K562 (cell line): ENCODE measurements at regions of chr9 and their contacts with region 1.

Region 1: DNA sequence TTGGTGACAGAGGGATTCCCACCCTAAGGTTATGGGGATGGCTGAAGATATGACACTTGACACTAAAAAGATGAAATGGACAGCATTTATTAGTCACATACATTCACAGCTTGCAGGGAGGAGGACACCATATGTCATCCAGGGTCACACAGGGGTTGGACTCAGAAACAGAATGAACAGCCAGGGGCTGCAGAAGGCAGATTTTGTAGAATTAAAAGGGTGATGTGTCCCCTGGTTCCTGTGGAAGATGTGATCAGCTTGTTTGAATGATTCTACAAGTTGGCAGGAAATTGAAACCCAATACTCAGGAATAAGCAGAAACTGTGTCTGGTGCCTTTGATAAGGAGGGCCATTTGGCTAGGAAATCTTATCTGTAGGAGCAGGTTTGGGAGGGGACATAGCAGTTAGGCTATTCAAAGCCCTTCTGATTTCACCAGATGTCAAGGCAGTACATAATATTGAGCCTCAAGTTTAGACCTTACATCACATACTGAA is 102.3 kb upstream of the GRIN3A start:
- DNase-seq: peak; percentile 79 to 93 (median 82)
- ATAC-seq: peak; percentile 93
- H3K4me3 ChIP-seq: no peak overlapping the region
- H3K27ac ChIP-seq: peak overlapping the region; percentile 56; the same call in 2 of the 3 replicates
- H3K4me1 ChIP-seq: peaks cover 13 to 22% of the 10 kb centered on the region in 2 experiments; a peak in 3 of 5 replicates
- H3K27me3 ChIP-seq: no peaks in the 10 kb centered on the region
- CTCF ChIP-seq: no peak
- EP300 ChIP-seq: peak; percentile 100
- POLR2A ChIP-seq: no peak
- RAD21 ChIP-seq: peak in 1 of 2 experiments; percentile 24; a peak in 2 of 4 replicates

Region 2: GRCh38 chr9:101791938-101792337 is 48.8 kb before region 1 on chr9:
- CTCF ChIA-PET with region 1: no interaction called
- POLR2A ChIA-PET with region 1: no interaction called
- in situ Hi-C with region 1: no loop called
- intact Hi-C with region 1: loop called (anchors 2 kb)
- DNase-seq: peak; percentile 12 to 71 (median 33)
- ATAC-seq: peak; percentile 98
- H3K4me3 ChIP-seq: no peak overlapping the region
- H3K27ac ChIP-seq: no peak overlapping the region
- H3K4me1 ChIP-seq: no peaks in the 10 kb centered on the region
- H3K27me3 ChIP-seq: no peaks in the 10 kb centered on the region
- CTCF ChIP-seq: peak; percentile 55 to 76 (median 71)
- EP300 ChIP-seq: no peak
- POLR2A ChIP-seq: no peak
- RAD21 ChIP-seq: peak; percentile 72 to 85

Region 3: DNA sequence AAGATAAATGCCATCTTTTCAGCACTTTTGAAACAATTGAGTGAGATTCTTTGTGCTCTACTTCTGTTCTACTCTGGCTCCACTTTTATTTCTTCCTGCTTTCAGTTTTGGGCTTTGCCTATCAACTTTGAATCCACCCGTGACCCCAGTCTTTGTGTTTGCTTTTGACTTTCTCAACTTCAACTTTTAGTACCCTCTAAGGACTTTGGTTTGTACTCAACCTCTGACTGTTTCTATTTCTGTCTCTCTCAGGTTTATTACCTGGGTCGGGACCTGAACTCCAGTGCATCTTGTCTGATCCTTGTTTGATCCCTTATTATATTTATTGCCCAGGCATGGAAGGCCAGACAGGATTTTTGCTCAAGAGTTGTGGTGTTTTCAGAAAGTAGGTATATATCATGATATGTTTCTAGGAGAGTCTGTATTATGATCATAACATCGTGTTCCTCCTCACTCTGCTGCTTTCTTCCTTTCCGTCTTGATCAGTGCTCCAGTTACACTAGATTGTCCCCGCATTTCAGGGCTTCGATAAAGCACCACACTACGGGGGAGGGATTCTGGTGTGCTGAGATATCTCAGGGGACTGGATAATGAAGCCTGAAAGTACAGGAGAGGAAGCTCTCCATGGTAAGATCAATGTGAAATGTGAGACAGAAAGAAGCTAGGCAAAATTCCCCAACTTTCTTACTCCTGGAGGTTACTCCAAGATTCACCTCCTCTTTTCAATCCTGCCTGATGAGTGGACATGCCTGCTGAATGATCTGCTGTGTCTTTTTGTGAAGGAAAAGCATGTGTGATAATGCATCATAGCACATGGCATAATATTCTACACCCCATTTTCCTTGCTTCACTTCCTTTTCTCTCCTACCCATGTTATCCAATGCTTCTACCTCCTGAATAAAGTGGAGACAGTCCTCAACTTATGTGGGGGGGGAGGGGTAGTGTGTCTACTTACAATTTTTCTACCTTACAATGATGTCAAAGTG is 53.2 kb after region 1 on chr9:
- CTCF ChIA-PET with region 1: no interaction called
- POLR2A ChIA-PET with region 1: no interaction called
- in situ Hi-C with region 1: no loop called
- intact Hi-C with region 1: loop called (anchors 5 kb)
- DNase-seq: peak in 2 of 4 experiments; percentile 61 to 82
- ATAC-seq: peak; percentile 93
- H3K4me3 ChIP-seq: no peak overlapping the region
- H3K27ac ChIP-seq: peak overlapping the region; percentile 82
- H3K4me1 ChIP-seq: peaks cover 0 to 13% of the 10 kb centered on the region in 2 experiments; a peak in 2 of 5 replicates
- H3K27me3 ChIP-seq: no peaks in the 10 kb centered on the region
- CTCF ChIP-seq: no peak
- EP300 ChIP-seq: peak; percentile 86
- POLR2A ChIP-seq: no peak
- RAD21 ChIP-seq: no peak